GM10248 (cell line): ENCODE measurements at regions of chr1 and their contacts with region 1.

Region 1: GRCh38 chr1:113928941-113929749 is at the start of gene HIPK1:
- DNase-seq: peak; percentile 92
- CTCF ChIP-seq: no peak

Region 2: GRCh38 chr1:113887402-113888175 is 41.6 kb before region 1 on chr1 and contains the start of gene BCL2L15:
- CTCF ChIA-PET with region 1: no interaction called
- POLR2A ChIA-PET with region 1: no interaction called
- DNase-seq: no peak
- CTCF ChIP-seq: no peak

Region 3: GRCh38 chr1:113904674-113905434 is 24.3 kb before region 1 on chr1 and contains the starts of genes AP4B1 and DCLRE1B:
- CTCF ChIA-PET with region 1: interaction called, 16 read pairs
- POLR2A ChIA-PET with region 1: interaction called, 40 read pairs
- DNase-seq: peak; percentile 97
- CTCF ChIP-seq: peak; percentile 89

Region 4: GRCh38 chr1:113912594-113913311 is 16.4 kb before region 1 on chr1:
- CTCF ChIA-PET with region 1: interaction called, 35 read pairs
- POLR2A ChIA-PET with region 1: interaction called, 6 read pairs
- DNase-seq: no peak
- CTCF ChIP-seq: no peak

Region 5: DNA sequence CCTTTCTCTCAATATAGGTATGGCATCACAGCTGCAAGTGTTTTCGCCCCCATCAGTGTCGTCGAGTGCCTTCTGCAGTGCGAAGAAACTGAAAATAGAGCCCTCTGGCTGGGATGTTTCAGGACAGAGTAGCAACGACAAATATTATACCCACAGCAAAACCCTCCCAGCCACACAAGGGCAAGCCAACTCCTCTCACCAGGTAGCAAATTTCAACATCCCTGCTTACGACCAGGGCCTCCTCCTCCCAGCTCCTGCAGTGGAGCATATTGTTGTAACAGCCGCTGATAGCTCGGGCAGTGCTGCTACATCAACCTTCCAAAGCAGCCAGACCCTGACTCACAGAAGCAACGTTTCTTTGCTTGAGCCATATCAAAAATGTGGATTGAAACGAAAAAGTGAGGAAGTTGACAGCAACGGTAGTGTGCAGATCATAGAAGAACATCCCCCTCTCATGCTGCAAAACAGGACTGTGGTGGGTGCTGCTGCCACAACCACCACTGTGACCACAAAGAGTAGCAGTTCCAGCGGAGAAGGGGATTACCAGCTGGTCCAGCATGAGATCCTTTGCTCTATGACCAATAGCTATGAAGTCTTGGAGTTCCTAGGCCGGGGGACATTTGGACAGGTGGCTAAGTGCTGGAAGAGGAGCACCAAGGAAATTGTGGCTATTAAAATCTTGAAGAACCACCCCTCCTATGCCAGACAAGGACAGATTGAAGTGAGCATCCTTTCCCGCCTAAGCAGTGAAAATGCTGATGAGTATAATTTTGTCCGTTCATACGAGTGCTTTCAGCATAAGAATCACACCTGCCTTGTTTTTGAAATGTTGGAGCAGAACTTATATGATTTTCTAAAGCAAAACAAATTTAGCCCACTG is 11.5 kb after region 1 on chr1:
- CTCF ChIA-PET with region 1: interaction called, 19 read pairs
- POLR2A ChIA-PET with region 1: interaction called, 9 read pairs
- DNase-seq: peak; percentile 29
- CTCF ChIP-seq: no peak

Region 6: GRCh38 chr1:113949007-113949406 is 19.9 kb after region 1 on chr1:
- CTCF ChIA-PET with region 1: interaction called, 14 read pairs
- POLR2A ChIA-PET with region 1: interaction called, 10 read pairs
- DNase-seq: no peak
- CTCF ChIP-seq: no peak

Region 7: GRCh38 chr1:114192329-114192728 is 263.2 kb after region 1 on chr1:
- CTCF ChIA-PET with region 1: no interaction called
- POLR2A ChIA-PET with region 1: no interaction called
- DNase-seq: no peak
- CTCF ChIP-seq: no peak